Activated naive CD4-positive, alpha-beta T cell treated with anti-CD3 and anti-CD28 coated beads for 36 hours (primary cell): ENCODE measurements at regions of chr9 and their contacts with region 1.

Region 1: DNA sequence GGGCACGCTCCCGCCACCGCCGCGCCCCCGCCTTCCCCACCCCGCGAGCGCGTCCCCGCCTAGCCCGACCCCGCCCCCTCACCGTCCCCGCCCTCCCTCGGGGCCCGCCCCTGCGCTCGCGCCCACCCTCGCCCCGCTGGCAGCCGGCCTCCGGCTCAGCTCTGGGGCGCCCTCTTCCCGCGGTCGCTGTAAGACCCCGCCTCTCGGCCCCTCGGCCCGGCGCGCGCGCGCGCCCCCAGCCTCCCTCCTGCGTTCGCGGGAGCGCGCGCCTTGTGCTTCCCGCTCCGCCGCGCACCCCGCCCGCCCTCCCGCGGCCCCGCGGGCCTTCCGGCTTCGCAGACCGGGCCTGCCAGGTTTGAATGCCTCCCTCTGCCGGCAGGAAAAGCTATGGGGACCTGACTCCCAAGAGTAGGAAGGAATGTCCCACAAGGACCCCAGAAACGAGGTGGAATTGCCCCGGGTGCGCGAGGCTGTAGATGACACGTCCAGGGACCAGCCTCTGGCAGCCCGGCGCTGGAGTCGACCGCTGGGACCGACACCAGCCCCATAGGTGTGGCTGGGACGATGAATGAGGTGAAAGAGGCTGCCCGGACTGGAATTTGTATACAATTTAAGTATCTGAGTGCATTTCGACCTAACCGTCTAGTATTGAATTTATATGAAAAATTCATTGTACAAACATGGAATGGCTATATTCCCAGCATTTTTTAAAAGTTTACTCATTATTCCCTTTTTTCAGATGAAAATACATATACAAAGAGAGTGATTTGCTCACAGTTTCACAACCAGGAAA is 416 bp upstream of the PTBP3 start:
- DNase-seq: peak; percentile 93
- H3K4me3 Mint-ChIP-seq: peak overlapping the region; percentile 90
- H3K27ac Mint-ChIP-seq: peak overlapping the region; percentile 95
- H3K4me1 Mint-ChIP-seq: peaks cover 21% of the 10 kb centered on the region
- H3K27me3 Mint-ChIP-seq: no peaks in the 10 kb centered on the region

Region 2: GRCh38 chr9:111631071-111631971 is 702.5 kb before region 1 on chr9 and contains the start of gene DNAJC25:
- CTCF ChIA-PET with region 1: no interaction called
- intact Hi-C with region 1: loop called (anchors 2 kb)
- DNase-seq: peak; percentile 97
- H3K4me3 Mint-ChIP-seq: peak within 1 kb of the TSS; percentile 92
- H3K27ac Mint-ChIP-seq: peak within 1 kb of the TSS; percentile 79
- H3K4me1 Mint-ChIP-seq: peaks cover 42% of the 10 kb centered on the region
- H3K27me3 Mint-ChIP-seq: no peaks in the 10 kb centered on the region
- total RNA-seq, gene DNAJC25: 3.4 to 3.9 TPM

Region 3: GRCh38 chr9:112037281-112038016 is 296.4 kb before region 1 on chr9:
- CTCF ChIA-PET with region 1: no interaction called
- intact Hi-C with region 1: loop called (anchors 5 kb)
- DNase-seq: peak; percentile 79
- H3K4me3 Mint-ChIP-seq: no peak overlapping the region
- H3K27ac Mint-ChIP-seq: peak overlapping the region; percentile 76
- H3K4me1 Mint-ChIP-seq: peaks cover 45% of the 10 kb centered on the region
- H3K27me3 Mint-ChIP-seq: peaks cover 4% of the 10 kb centered on the region

Region 4: DNA sequence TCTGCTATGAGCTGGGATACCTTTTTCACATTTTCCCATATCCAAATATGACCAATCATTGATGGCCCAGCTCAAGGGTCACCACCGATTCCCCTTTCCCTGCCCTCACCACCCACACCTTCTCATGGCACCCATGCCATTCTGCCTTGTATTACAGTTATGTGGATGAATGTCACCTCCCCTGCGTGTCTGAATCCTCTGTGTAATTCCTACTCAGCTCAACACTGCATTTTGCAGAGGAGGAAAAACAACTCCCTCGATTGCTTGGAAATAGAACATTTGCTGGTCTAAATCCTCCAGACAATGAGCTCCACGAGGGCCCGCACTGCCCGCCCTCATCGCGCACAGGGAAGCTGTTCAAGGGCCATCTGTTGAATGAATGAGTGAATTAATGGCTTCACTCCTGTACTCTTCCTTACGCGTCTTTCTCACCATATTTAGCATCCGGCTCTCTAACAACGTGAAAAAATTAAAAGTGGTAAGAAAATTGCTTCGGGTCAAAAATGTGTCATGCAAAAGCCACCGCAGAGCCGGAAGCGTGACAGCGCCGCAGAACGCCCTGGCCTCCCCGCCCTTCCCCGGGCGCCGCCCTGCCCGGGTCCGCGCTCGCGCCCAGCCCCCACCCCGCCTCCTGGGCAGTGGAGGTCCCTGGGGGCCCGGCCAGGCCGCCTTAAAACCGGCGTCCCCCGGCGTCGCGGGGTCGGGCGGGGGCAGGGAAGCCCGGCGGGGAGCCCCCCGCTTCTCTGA is 159.4 kb before region 1 on chr9:
- CTCF ChIA-PET with region 1: interaction called, 3 read pairs
- intact Hi-C with region 1: loop called (anchors 1 kb)
- DNase-seq: peak; percentile 86
- H3K4me3 Mint-ChIP-seq: peak overlapping the region; percentile 82
- H3K27ac Mint-ChIP-seq: peak overlapping the region; percentile 79
- H3K4me1 Mint-ChIP-seq: peaks cover 30% of the 10 kb centered on the region
- H3K27me3 Mint-ChIP-seq: peaks cover 19% of the 10 kb centered on the region

Region 5: DNA sequence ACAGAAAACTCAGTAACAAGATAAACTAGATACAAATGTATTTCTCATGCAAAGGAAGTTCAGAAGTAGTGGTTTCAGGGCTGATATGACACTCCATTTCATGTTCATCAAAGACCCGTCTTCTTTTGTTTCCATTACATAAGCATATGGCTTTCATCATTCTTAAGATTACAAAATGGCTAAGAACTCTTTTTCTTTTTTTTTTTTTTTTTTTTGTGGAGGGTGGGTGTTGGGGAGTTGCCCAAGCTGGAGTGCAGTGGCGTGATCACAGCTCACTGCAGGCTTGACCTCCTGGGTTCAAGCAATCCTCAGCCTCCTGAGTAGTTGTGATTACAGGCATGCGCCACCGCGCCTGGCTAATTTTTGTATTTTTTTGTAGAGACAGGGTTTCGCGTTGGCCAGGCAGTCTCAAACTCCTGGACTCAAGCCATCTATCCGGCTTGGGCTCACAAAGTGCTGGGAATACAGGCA is 21.6 kb after region 1 on chr9:
- CTCF ChIA-PET with region 1: interaction called, 7 read pairs
- intact Hi-C with region 1: loop called (anchors 1 kb)
- DNase-seq: peak; percentile 18
- H3K4me3 Mint-ChIP-seq: no peak overlapping the region
- H3K27ac Mint-ChIP-seq: peak overlapping the region; percentile 34
- H3K4me1 Mint-ChIP-seq: peaks cover 31% of the 10 kb centered on the region
- H3K27me3 Mint-ChIP-seq: no peaks in the 10 kb centered on the region

Region 6: GRCh38 chr9:112717661-112718341 is 384.0 kb after region 1 on chr9 and contains the start of gene INIP:
- CTCF ChIA-PET with region 1: interaction called, 3 read pairs
- intact Hi-C with region 1: loop called (anchors 1 kb)
- DNase-seq: peak; percentile 97
- H3K4me3 Mint-ChIP-seq: peak within 1 kb of the TSS; percentile 97
- H3K27ac Mint-ChIP-seq: peak within 1 kb of the TSS; percentile 94
- H3K4me1 Mint-ChIP-seq: peaks cover 23% of the 10 kb centered on the region
- H3K27me3 Mint-ChIP-seq: no peaks in the 10 kb centered on the region
- total RNA-seq, gene INIP: 31.1 to 33.4 TPM